Activated CD8-positive, alpha-beta memory T cell treated with anti-CD3 and anti-CD28 coated beads, Interleukin-2, amount 10 ng/mL, durations not matched to agents 7 days and 5 days (primary cell): ENCODE measurements at regions of chr16 and their contacts with region 1.

Region 1: GRCh38 chr16:67279296-67280089 is at the start of gene PLEKHG4:
- DNase-seq: peak; percentile 88
- ATAC-seq: peak; percentile 97
- H3K4me3 Mint-ChIP-seq: peak within 1 kb of the TSS; percentile 80
- H3K27ac Mint-ChIP-seq: peak within 1 kb of the TSS; percentile 78
- H3K4me1 Mint-ChIP-seq: peaks cover 19% of the 10 kb centered on the region
- H3K27me3 Mint-ChIP-seq: no peaks in the 10 kb centered on the region
- total RNA-seq, gene PLEKHG4: 7.7 to 12.8 TPM

Region 2: GRCh38 chr16:67260426-67261075 is 18.9 kb before region 1 on chr16:
- CTCF ChIA-PET with region 1: interaction called, 11 read pairs
- DNase-seq: peak; percentile 59
- ATAC-seq: peak; percentile 59
- H3K4me3 Mint-ChIP-seq: no peak overlapping the region
- H3K27ac Mint-ChIP-seq: no peak overlapping the region
- H3K4me1 Mint-ChIP-seq: no peaks in the 10 kb centered on the region
- H3K27me3 Mint-ChIP-seq: no peaks in the 10 kb centered on the region

Region 3: GRCh38 chr16:67268136-67268579 is 11.3 kb before region 1 on chr16:
- CTCF ChIA-PET with region 1: interaction called, 11 read pairs
- DNase-seq: no peak
- ATAC-seq: no peak
- H3K4me3 Mint-ChIP-seq: no peak overlapping the region
- H3K27ac Mint-ChIP-seq: no peak overlapping the region
- H3K4me1 Mint-ChIP-seq: no peaks in the 10 kb centered on the region
- H3K27me3 Mint-ChIP-seq: no peaks in the 10 kb centered on the region

Region 4: GRCh38 chr16:67339453-67339852 is 60.0 kb after region 1 on chr16:
- CTCF ChIA-PET with region 1: interaction called, 18 read pairs
- DNase-seq: no peak
- ATAC-seq: peak; percentile 16
- H3K4me3 Mint-ChIP-seq: no peak overlapping the region
- H3K27ac Mint-ChIP-seq: no peak overlapping the region
- H3K4me1 Mint-ChIP-seq: no peaks in the 10 kb centered on the region
- H3K27me3 Mint-ChIP-seq: peaks cover 17% of the 10 kb centered on the region

Region 5: GRCh38 chr16:67356396-67356795 is 76.9 kb after region 1 on chr16:
- CTCF ChIA-PET with region 1: no interaction called
- DNase-seq: no peak
- ATAC-seq: no peak
- H3K4me3 Mint-ChIP-seq: no peak overlapping the region
- H3K27ac Mint-ChIP-seq: no peak overlapping the region
- H3K4me1 Mint-ChIP-seq: peaks cover 7% of the 10 kb centered on the region
- H3K27me3 Mint-ChIP-seq: peaks cover 22% of the 10 kb centered on the region

Region 6: GRCh38 chr16:67399181-67399733 is 119.8 kb after region 1 on chr16:
- CTCF ChIA-PET with region 1: interaction called, 12 read pairs
- DNase-seq: peak; percentile 55
- ATAC-seq: peak; percentile 83
- H3K4me3 Mint-ChIP-seq: no peak overlapping the region
- H3K27ac Mint-ChIP-seq: no peak overlapping the region
- H3K4me1 Mint-ChIP-seq: no peaks in the 10 kb centered on the region
- H3K27me3 Mint-ChIP-seq: peaks cover 22% of the 10 kb centered on the region